Activated CD4-positive, alpha-beta memory T cell treated with anti-CD3 and anti-CD28 coated beads for 36 hours (primary cell): ENCODE measurements at regions of chr14 and their contacts with region 1.

Region 1: DNA sequence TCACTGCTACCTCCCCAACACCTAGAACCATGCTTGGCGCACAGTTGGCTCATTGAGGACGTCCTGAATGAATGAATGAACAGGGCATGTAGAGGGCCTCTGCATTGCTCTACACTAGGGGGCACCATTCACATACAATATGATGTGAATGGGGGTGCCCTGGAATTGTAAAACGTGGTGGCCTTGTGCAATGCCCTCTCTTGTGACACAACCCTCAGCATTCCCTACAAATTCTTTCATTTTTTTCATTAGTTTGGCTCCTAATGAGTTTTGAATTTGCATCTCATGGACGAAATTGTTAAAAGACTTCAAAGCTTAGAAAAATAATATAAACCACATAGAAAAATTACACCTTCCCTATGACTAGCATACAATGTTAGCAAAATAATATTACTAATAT is 2.3 kb upstream of the DIO2 start:
- DNase-seq: no peak
- H3K4me3 Mint-ChIP-seq: no peak overlapping the region
- H3K27ac Mint-ChIP-seq: no peak overlapping the region
- H3K4me1 Mint-ChIP-seq: no peaks in the 10 kb centered on the region
- H3K27me3 Mint-ChIP-seq: no peaks in the 10 kb centered on the region

Region 2: GRCh38 chr14:80100681-80101080 is 112.9 kb before region 1 on chr14:
- CTCF ChIA-PET with region 1: no interaction called
- POLR2A ChIA-PET with region 1: no interaction called
- intact Hi-C with region 1: no loop called
- DNase-seq: no peak
- H3K4me3 Mint-ChIP-seq: no peak overlapping the region
- H3K27ac Mint-ChIP-seq: no peak overlapping the region
- H3K4me1 Mint-ChIP-seq: no peaks in the 10 kb centered on the region
- H3K27me3 Mint-ChIP-seq: no peaks in the 10 kb centered on the region

Region 3: DNA sequence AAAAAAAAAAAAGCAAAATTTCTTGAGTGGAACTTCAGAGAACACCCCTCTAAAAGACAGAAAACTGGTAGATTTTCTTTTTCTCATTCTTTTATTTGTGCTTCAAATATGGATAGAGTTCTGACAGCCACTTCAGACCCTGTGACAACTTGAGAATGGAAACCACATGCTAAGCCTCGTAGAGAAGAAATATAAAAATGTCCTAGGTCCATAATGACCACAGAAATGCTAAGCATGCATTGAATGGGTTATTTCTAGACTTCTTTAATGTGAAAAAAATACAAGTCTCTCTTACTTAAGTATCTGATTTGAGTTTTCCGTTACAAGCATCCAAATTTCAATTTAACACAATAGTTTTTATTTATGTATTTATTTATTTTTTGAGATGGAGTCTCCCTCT is 26.0 kb after region 1 on chr14:
- CTCF ChIA-PET with region 1: no interaction called
- POLR2A ChIA-PET with region 1: no interaction called
- intact Hi-C with region 1: loop called (anchors 1 kb)
- DNase-seq: no peak
- H3K4me3 Mint-ChIP-seq: no peak overlapping the region
- H3K27ac Mint-ChIP-seq: no peak overlapping the region
- H3K4me1 Mint-ChIP-seq: no peaks in the 10 kb centered on the region
- H3K27me3 Mint-ChIP-seq: no peaks in the 10 kb centered on the region

Region 4: GRCh38 chr14:80587075-80587724 is 373.6 kb after region 1 on chr14:
- CTCF ChIA-PET with region 1: no interaction called
- POLR2A ChIA-PET with region 1: no interaction called
- intact Hi-C with region 1: loop called (anchors 10 kb)
- DNase-seq: no peak
- H3K4me3 Mint-ChIP-seq: no peak overlapping the region
- H3K27ac Mint-ChIP-seq: peak overlapping the region; percentile 67
- H3K4me1 Mint-ChIP-seq: peaks cover 17% of the 10 kb centered on the region
- H3K27me3 Mint-ChIP-seq: no peaks in the 10 kb centered on the region

Region 5: DNA sequence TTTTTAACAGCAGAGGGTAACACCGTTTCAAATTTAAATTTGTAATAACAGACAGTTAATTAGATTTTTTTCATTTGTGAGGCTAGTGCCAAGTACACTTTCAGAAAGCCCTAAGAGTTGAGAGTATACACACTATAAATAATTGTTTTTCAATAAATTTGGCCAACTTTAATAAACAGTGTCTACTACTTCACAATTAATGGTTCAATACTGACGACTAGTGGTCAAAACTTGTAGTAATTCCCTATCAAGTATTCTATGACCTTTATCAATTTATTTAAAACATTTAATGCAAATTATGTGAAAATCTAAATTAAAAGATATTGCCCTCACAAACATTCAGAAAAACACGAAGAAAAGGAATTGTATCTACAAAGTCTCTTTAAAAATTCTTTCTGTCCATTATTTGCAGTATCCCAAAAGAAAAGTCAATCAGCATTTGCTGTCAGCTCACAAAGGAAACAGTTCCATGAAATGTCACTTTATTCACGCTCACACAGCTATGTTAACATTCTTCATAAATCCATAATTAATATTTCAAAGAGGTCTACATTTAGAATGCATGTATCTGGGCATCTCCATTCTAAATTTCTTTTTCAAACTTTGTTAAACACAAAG is 636.7 kb after region 1 on chr14:
- CTCF ChIA-PET with region 1: interaction called, 4 read pairs
- POLR2A ChIA-PET with region 1: no interaction called
- intact Hi-C with region 1: loop called (anchors 10 kb)
- DNase-seq: no peak
- H3K4me3 Mint-ChIP-seq: no peak overlapping the region
- H3K27ac Mint-ChIP-seq: no peak overlapping the region
- H3K4me1 Mint-ChIP-seq: no peaks in the 10 kb centered on the region
- H3K27me3 Mint-ChIP-seq: no peaks in the 10 kb centered on the region